Caco-2 (cell line): ENCODE measurements at regions of chr6 and their contacts with region 1.

Region 1: GRCh38 chr6:74069089-74069581 is 373.1 kb downstream of the CD109 start:
- DNase-seq: no peak
- H3K4me3 ChIP-seq: no peak overlapping the region
- H3K4me3 Mint-ChIP-seq: no peak overlapping the region
- H3K27ac Mint-ChIP-seq: no peak overlapping the region
- H3K4me1 ChIP-seq: no peaks in the 10 kb centered on the region
- H3K4me1 Mint-ChIP-seq: no peaks in the 10 kb centered on the region
- H3K27me3 ChIP-seq: no peaks in the 10 kb centered on the region
- H3K27me3 Mint-ChIP-seq: no peaks in the 10 kb centered on the region
- CTCF ChIP-seq: no peak

Region 2: GRCh38 chr6:73942592-73943186 is 126.4 kb before region 1 on chr6:
- CTCF ChIA-PET with region 1: no interaction called
- POLR2A ChIA-PET with region 1: no interaction called
- intact Hi-C with region 1: no loop called
- DNase-seq: peak; percentile 14 to 39
- H3K4me3 ChIP-seq: no peak overlapping the region
- H3K4me3 Mint-ChIP-seq: no peak overlapping the region
- H3K27ac Mint-ChIP-seq: no peak overlapping the region
- H3K4me1 ChIP-seq: no peaks in the 10 kb centered on the region
- H3K4me1 Mint-ChIP-seq: no peaks in the 10 kb centered on the region
- H3K27me3 ChIP-seq: no peaks in the 10 kb centered on the region
- H3K27me3 Mint-ChIP-seq: no peaks in the 10 kb centered on the region
- CTCF ChIP-seq: no peak

Region 3: DNA sequence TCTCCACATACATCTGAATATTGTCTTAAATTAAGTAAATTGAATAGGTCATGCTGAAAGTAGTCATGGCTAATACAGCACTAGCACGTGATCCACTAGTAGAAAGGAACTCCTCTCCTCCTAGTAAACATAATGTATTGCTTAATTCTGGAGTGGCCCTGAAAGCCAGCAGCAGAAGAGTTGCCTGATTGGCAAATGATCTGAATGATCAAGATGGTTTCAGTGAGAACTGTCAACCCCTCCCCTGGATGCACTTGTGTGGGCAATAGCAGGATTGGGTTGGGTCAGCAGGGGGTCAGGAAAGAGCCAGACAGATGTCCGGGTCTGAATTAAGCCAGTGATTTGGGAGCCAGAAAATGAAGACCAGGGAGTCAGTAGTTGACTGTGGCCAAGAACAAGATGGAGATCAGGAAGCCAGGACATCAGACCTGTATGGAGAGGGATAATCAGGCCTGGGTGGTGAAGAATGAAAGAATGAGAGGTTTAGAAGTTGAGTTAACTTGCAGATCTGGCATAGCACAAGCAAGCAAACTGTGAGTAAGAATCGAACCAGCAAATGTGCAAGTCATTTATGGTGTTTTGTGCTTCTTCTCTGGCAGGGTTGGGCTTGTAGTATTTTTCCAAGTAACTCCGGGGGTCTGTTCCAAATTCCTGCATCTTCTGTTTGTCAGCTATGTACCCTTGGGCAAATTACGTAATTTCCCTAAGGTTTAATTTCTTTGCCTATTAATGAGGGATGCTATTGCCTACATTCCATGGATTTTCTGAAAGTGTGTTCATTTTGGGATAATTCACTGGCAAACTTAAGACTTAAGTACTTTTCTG is 68.3 kb before region 1 on chr6:
- CTCF ChIA-PET with region 1: interaction called, 10 read pairs
- POLR2A ChIA-PET with region 1: no interaction called
- intact Hi-C with region 1: no loop called
- DNase-seq: no peak
- H3K4me3 ChIP-seq: no peak overlapping the region
- H3K4me3 Mint-ChIP-seq: no peak overlapping the region
- H3K27ac Mint-ChIP-seq: no peak overlapping the region
- H3K4me1 ChIP-seq: no peaks in the 10 kb centered on the region
- H3K4me1 Mint-ChIP-seq: no peaks in the 10 kb centered on the region
- H3K27me3 ChIP-seq: no peaks in the 10 kb centered on the region
- H3K27me3 Mint-ChIP-seq: no peaks in the 10 kb centered on the region
- CTCF ChIP-seq: no peak